ENCODE measurements at regions of chr1 and their contacts with region 1.

Region 1: DNA sequence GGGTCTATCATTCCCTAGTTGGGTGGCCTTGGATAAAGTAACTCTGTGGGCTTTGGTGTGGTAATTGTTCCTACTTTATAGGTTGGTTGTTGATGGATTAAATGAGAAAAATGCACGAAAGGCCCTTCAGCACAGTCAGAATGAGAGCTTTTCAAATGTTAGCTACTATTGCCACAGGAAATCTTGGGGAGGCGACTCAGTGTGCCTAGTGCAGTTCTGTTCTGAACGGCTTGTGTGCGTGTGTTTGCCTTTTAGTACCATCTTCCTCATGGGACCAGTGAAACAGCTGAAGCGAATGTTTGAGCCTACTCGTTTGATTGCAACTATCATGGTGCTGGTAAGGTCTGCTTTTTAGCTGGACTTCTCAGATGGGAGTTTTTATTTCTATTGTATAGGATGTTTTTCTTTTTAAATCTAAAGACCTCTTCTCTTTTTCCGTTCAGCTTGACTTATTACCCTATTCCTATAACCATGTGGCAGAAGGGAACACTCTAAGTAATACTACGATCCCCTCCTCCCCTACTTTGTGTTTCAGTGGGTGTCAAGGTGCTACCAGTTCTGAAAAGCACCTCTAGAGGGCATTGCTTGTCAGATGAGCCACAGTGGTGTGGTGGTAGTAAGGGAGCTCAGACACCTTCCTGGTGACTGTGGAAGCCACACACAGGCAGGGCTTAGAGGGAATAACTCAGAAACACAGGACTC is 9.2 kb downstream of the SFT2D2 start:
- DNase-seq: peak; percentile 51
- H3K4me3 ChIP-seq: no peak overlapping the region
- H3K27ac ChIP-seq: no peak overlapping the region
- H3K4me1 ChIP-seq: peaks cover 0 to 19% of the 10 kb centered on the region in 2 experiments; a peak in 2 of 4 replicates
- H3K27me3 ChIP-seq: no peaks in the 10 kb centered on the region
- CTCF ChIP-seq: peak; percentile 72
- EP300 ChIP-seq: no peak
- RAD21 ChIP-seq: peak; percentile 55

Region 2: DNA sequence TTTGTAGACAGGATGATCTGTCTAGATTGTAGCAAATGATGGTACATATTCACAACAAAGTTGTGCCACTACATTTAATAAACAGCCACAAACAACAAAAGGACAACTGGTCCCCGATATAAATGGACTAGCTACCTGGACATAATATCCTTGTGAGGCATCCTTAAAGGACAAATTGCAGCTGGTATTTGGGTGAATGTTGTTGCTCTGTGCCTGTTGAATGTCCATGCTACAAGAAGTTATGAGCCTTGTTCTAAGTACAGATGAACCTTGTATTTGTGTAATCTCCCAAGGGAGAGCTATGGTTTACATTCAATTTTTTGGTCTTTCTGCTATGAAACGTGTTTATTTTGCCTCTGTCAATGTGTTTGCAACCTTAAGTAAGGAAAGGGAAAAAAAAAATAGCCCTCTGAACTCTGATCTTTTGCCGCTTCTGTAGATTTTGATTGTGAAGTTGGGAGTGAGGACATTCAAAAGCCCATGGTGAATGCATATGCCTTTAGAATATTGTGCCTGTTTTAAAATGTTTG is 17.3 kb after region 1 on chr1:
- CTCF ChIA-PET with region 1: interaction called, 10 read pairs
- POLR2A ChIA-PET with region 1: no interaction called
- DNase-seq: no peak
- H3K4me3 ChIP-seq: no peak overlapping the region
- H3K27ac ChIP-seq: no peak overlapping the region
- H3K4me1 ChIP-seq: peaks cover 0 to 9% of the 10 kb centered on the region in 2 experiments; a peak in 1 of 4 replicates
- H3K27me3 ChIP-seq: no peaks in the 10 kb centered on the region
- CTCF ChIP-seq: no peak
- EP300 ChIP-seq: no peak
- RAD21 ChIP-seq: no peak

Measured in SK-N-SH (cell line).